A673 (cell line): ENCODE measurements at regions of chr3 and their contacts with region 1.

Region 1: DNA sequence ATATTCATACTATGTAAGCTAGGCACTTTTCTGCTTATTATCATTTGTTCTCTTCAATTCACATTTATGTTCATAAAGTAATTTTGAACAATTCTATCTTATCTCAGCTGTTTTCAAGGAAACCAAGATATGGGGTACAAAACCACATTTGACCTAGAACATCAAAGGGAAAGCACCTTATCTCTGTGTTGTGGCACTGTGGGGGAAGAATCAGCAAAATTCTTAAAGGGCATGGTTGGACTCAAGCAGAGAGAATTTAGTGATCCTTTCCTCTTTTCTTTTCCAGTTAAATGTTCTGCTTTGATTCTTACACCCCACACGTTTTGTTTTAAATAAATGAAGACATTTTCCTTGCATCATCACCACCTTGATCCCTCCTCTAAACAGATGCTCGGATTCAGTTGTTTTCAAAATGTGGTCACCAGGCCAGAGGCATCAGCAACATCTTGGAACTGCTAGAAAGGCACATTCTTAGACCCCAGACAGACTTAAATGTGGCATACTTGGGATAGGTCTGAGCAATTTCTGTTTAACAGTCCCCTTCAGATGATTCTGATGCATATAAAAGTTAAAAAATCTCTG is 128.4 kb upstream of the TP63 start:
- DNase-seq: no peak
- H3K4me3 ChIP-seq: no peak overlapping the region
- H3K27ac ChIP-seq: peak overlapping the region; percentile 99
- H3K4me1 ChIP-seq: peaks cover 51% of the 10 kb centered on the region
- H3K27me3 ChIP-seq: no peaks in the 10 kb centered on the region
- CTCF ChIP-seq: no peak

Region 2: DNA sequence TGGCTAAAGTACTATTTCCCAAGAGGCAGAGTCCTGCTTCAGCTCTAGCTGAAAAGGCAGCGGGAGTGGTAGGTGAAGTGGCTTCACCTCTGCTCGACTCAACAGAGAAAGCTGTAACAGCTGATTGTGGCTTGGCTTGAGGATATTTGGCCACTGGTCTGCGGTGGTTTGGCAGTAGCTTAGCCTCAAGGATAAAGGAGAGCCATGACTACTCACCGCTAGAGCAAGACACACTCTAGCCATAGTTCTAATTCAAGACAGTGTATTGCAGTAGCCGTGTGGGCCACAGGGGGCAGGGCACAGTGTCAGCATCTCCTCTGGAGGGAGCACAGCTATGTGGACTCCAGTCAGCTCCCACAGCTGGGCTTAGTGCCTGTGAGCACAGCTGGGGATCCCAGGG is 307.5 kb before region 1 on chr3:
- CTCF ChIA-PET with region 1: no interaction called
- POLR2A ChIA-PET with region 1: no interaction called
- intact Hi-C with region 1: no loop called
- DNase-seq: peak; percentile 23
- H3K4me3 ChIP-seq: no peak overlapping the region
- H3K27ac ChIP-seq: no peak overlapping the region
- H3K4me1 ChIP-seq: no peaks in the 10 kb centered on the region
- H3K27me3 ChIP-seq: no peaks in the 10 kb centered on the region
- CTCF ChIP-seq: peak; percentile 30; the same call in 1 of the 2 replicates

Region 3: DNA sequence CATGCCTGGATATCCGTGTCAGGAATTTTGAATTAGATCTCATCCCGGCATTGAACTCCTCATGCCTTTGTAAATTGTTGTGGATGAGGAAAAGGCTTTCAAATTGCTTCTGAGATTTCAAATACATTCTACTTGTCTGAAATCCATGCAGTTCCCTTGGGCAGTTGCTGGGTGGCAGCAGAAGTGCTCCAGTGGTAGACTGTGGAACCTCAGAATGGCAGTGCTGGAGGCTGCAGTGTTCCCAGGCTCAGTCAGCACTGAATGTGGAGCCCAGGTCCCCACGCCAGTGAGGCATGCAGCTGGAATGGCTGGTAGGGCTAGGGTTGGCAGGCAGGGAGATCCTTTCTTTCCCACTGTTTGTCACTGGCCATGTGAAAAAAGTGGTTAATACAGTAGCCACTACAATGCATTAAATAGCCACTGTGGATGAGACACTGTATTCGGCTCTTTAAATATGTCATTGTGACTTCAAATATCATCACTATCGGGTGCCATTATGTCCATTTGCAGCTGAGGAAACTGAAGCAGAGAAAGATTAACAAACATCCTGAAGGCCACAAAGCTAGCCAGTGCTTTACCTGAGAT is 232.4 kb before region 1 on chr3:
- CTCF ChIA-PET with region 1: interaction called, 14 read pairs
- POLR2A ChIA-PET with region 1: no interaction called
- intact Hi-C with region 1: loop called (anchors 1 kb)
- DNase-seq: peak; percentile 91
- H3K4me3 ChIP-seq: no peak overlapping the region
- H3K27ac ChIP-seq: peak overlapping the region; percentile 78
- H3K4me1 ChIP-seq: peaks cover 65% of the 10 kb centered on the region
- H3K27me3 ChIP-seq: no peaks in the 10 kb centered on the region
- CTCF ChIP-seq: peak; percentile 88

Region 4: GRCh38 chr3:189839576-189839975 is 336.8 kb after region 1 on chr3:
- CTCF ChIA-PET with region 1: no interaction called
- POLR2A ChIA-PET with region 1: no interaction called
- intact Hi-C with region 1: loop called (anchors 5 kb)
- DNase-seq: peak; percentile 27
- H3K4me3 ChIP-seq: no peak overlapping the region
- H3K27ac ChIP-seq: peak overlapping the region; percentile 90
- H3K4me1 ChIP-seq: peaks cover 62% of the 10 kb centered on the region
- H3K27me3 ChIP-seq: no peaks in the 10 kb centered on the region
- CTCF ChIP-seq: no peak

Region 5: GRCh38 chr3:190205739-190206138 is 703.0 kb after region 1 on chr3:
- CTCF ChIA-PET with region 1: no interaction called
- POLR2A ChIA-PET with region 1: no interaction called
- intact Hi-C with region 1: loop called (anchors 5 kb)
- DNase-seq: no peak
- H3K4me3 ChIP-seq: no peak overlapping the region
- H3K27ac ChIP-seq: no peak overlapping the region
- H3K4me1 ChIP-seq: no peaks in the 10 kb centered on the region
- H3K27me3 ChIP-seq: no peaks in the 10 kb centered on the region
- CTCF ChIP-seq: no peak

Region 6: GRCh38 chr3:191005790-191006189 is 1503.0 kb after region 1 on chr3:
- CTCF ChIA-PET with region 1: no interaction called
- POLR2A ChIA-PET with region 1: no interaction called
- intact Hi-C with region 1: loop called (anchors 5 kb)
- DNase-seq: no peak
- H3K4me3 ChIP-seq: no peak overlapping the region
- H3K27ac ChIP-seq: peak overlapping the region; percentile 22
- H3K4me1 ChIP-seq: peaks cover 37% of the 10 kb centered on the region
- H3K27me3 ChIP-seq: no peaks in the 10 kb centered on the region
- CTCF ChIP-seq: no peak